Caco-2 (cell line): ENCODE measurements at regions of chr7 and their contacts with region 1.

Region 1: GRCh38 chr7:38796626-38797501 is 112.1 kb downstream of the VPS41 start:
- DNase-seq: peak in 1 of 2 experiments; percentile 68
- H3K4me3 ChIP-seq: no peak overlapping the region
- H3K4me3 Mint-ChIP-seq: no peak overlapping the region
- H3K27ac Mint-ChIP-seq: no peak overlapping the region
- H3K4me1 ChIP-seq: no peaks in the 10 kb centered on the region
- H3K4me1 Mint-ChIP-seq: no peaks in the 10 kb centered on the region
- H3K27me3 ChIP-seq: no peaks in the 10 kb centered on the region
- H3K27me3 Mint-ChIP-seq: no peaks in the 10 kb centered on the region
- CTCF ChIP-seq: peak; percentile 69 to 84

Region 2: DNA sequence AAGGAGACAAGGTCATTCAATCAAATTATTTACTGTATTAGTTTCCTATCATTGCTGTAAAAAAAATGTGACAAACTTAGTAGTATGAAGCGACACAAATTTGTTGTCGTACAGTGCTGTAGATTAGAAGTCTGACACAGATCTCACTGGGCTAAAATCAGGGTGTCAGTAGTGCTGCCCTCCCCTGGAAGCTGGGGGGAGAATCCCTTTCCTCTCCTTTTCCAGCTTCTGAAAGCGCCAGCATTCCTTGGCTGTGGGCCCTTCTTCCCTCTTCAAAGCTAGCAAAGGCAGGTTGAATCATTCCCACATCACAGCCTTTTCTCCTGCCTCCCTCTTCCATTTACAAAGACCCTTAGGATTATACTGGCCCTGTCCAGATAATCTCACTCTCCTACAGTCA is 84.2 kb after region 1 on chr7:
- CTCF ChIA-PET with region 1: no interaction called
- POLR2A ChIA-PET with region 1: no interaction called
- intact Hi-C with region 1: loop called (anchors 1 kb)
- DNase-seq: peak in 1 of 2 experiments; percentile 19
- H3K4me3 ChIP-seq: no peak overlapping the region
- H3K4me3 Mint-ChIP-seq: no peak overlapping the region
- H3K27ac Mint-ChIP-seq: no peak overlapping the region
- H3K4me1 ChIP-seq: no peaks in the 10 kb centered on the region
- H3K4me1 Mint-ChIP-seq: no peaks in the 10 kb centered on the region
- H3K27me3 ChIP-seq: no peaks in the 10 kb centered on the region
- H3K27me3 Mint-ChIP-seq: no peaks in the 10 kb centered on the region
- CTCF ChIP-seq: peak in 1 of 2 experiments; percentile 17

Region 3: GRCh38 chr7:38908759-38909335 is 112.0 kb after region 1 on chr7 and contains the start of gene VPS41:
- CTCF ChIA-PET with region 1: no interaction called
- POLR2A ChIA-PET with region 1: no interaction called
- intact Hi-C with region 1: loop called (anchors 2 kb)
- DNase-seq: peak; percentile 82 to 83
- H3K4me3 ChIP-seq: peak within 1 kb of the TSS; percentile 94
- H3K4me3 Mint-ChIP-seq: peak within 1 kb of the TSS; percentile 99
- H3K27ac Mint-ChIP-seq: peak within 1 kb of the TSS; percentile 87
- H3K4me1 ChIP-seq: peaks cover 19% of the 10 kb centered on the region; the same call in 1 of the 2 replicates
- H3K4me1 Mint-ChIP-seq: peaks cover 16% of the 10 kb centered on the region
- H3K27me3 ChIP-seq: no peaks in the 10 kb centered on the region
- H3K27me3 Mint-ChIP-seq: no peaks in the 10 kb centered on the region
- CTCF ChIP-seq: no peak
- total RNA-seq, gene VPS41: 73.9 and 86.9 TPM in 2 replicates

Region 4: GRCh38 chr7:38942431-38943051 is 145.7 kb after region 1 on chr7:
- CTCF ChIA-PET with region 1: no interaction called
- POLR2A ChIA-PET with region 1: no interaction called
- intact Hi-C with region 1: no loop called
- DNase-seq: no peak
- H3K4me3 ChIP-seq: no peak overlapping the region
- H3K4me3 Mint-ChIP-seq: no peak overlapping the region
- H3K27ac Mint-ChIP-seq: no peak overlapping the region
- H3K4me1 ChIP-seq: no peaks in the 10 kb centered on the region
- H3K4me1 Mint-ChIP-seq: peaks cover 6% of the 10 kb centered on the region
- H3K27me3 ChIP-seq: no peaks in the 10 kb centered on the region
- H3K27me3 Mint-ChIP-seq: peaks cover 5% of the 10 kb centered on the region
- CTCF ChIP-seq: no peak

Region 5: DNA sequence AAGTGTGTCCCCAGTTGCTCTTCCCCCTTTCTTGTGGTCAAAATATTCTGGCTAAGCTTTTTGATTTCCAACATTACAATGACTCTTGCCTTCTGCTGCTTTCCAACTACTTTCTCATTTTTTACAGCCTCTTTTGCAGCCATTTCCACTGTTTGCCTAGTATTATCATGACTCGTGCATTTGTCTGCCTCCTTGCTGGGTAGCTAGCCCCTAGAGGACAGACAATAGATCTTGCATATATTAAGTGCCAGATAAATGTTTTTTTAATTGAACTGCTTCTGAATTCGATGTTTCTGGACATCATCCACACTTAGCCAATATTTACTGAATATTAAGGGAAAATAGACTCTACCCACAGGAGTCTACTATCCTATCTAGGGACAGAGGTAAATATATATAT is 305.4 kb after region 1 on chr7:
- CTCF ChIA-PET with region 1: no interaction called
- POLR2A ChIA-PET with region 1: no interaction called
- intact Hi-C with region 1: loop called (anchors 10 kb)
- DNase-seq: no peak
- H3K4me3 ChIP-seq: no peak overlapping the region
- H3K4me3 Mint-ChIP-seq: no peak overlapping the region
- H3K27ac Mint-ChIP-seq: no peak overlapping the region
- H3K4me1 ChIP-seq: no peaks in the 10 kb centered on the region
- H3K4me1 Mint-ChIP-seq: no peaks in the 10 kb centered on the region
- H3K27me3 ChIP-seq: no peaks in the 10 kb centered on the region
- H3K27me3 Mint-ChIP-seq: peaks cover 6% of the 10 kb centered on the region
- CTCF ChIP-seq: no peak

Region 6: DNA sequence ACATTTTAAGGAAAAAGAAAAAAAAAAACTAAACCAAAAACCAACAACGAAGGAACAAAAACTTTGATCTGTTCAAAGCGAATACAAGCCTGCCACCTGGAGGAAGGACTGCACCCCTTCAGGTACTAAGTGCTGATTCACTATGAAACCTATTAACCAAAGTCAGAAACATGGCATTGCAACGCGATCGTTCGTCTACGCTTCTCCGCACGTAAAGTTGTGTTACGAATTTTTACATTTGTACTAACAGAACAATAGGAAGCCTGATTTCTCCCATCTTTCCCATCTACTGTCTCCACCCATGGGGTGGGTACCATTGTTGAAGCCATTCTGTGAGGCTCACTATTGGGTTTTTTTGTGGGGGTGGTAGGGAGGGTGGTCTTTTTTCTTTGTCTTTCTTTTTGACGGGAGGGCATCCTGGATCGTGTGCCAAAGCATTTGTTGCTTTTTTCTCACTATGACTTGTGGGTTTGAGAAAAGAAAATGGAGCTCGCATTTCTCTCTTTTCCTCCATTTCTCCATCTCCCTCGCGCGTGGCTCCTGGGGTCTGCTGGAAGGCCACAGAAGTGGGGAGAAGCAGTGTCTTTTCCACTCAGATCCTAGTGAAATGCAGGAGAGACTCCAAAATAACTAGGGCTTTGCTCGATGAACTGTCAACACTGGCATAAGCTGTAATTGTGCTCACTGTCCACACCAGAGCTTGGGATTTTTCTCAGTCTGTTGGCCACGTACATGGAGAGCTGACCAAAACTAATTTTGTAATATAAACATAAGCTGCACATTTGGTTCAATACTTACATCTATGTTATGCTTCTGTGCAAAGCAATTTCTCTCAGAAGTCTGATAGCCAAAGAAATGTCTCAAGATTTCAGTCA is 668.4 kb after region 1 on chr7:
- CTCF ChIA-PET with region 1: no interaction called
- POLR2A ChIA-PET with region 1: no interaction called
- intact Hi-C with region 1: loop called (anchors 1 kb)
- DNase-seq: peak; percentile 53 to 64
- H3K4me3 ChIP-seq: no peak overlapping the region
- H3K4me3 Mint-ChIP-seq: peak overlapping the region; percentile 49
- H3K27ac Mint-ChIP-seq: peak overlapping the region; percentile 36
- H3K4me1 ChIP-seq: peaks cover 4% of the 10 kb centered on the region; the same call in 1 of the 2 replicates
- H3K4me1 Mint-ChIP-seq: peaks cover 9% of the 10 kb centered on the region
- H3K27me3 ChIP-seq: no peaks in the 10 kb centered on the region
- H3K27me3 Mint-ChIP-seq: peaks cover 7% of the 10 kb centered on the region
- CTCF ChIP-seq: peak; percentile 78 to 79

Region 7: GRCh38 chr7:39517240-39517639 is 720.4 kb after region 1 on chr7:
- CTCF ChIA-PET with region 1: no interaction called
- POLR2A ChIA-PET with region 1: no interaction called
- intact Hi-C with region 1: loop called (anchors 1 kb)
- DNase-seq: no peak
- H3K4me3 ChIP-seq: no peak overlapping the region
- H3K4me3 Mint-ChIP-seq: no peak overlapping the region
- H3K27ac Mint-ChIP-seq: no peak overlapping the region
- H3K4me1 ChIP-seq: no peaks in the 10 kb centered on the region
- H3K4me1 Mint-ChIP-seq: no peaks in the 10 kb centered on the region
- H3K27me3 ChIP-seq: no peaks in the 10 kb centered on the region
- H3K27me3 Mint-ChIP-seq: peaks cover 8% of the 10 kb centered on the region
- CTCF ChIP-seq: no peak